ENCODE measurements at regions of chr7 and their contacts with region 1.

Region 1: GRCh38 chr7:152336754-152337368 is 98.9 kb downstream of the KMT2C start:
- DNase-seq: no peak
- H3K4me3 ChIP-seq: no peak overlapping the region
- CTCF ChIP-seq: peak; percentile 49

Region 2: GRCh38 chr7:152351168-152351567 is 14.3 kb after region 1 on chr7:
- CTCF ChIA-PET with region 1: interaction called, 13 read pairs
- POLR2A ChIA-PET with region 1: no interaction called
- DNase-seq: no peak
- H3K4me3 ChIP-seq: no peak overlapping the region
- CTCF ChIP-seq: no peak

Region 3: GRCh38 chr7:152707766-152708165 is 370.9 kb after region 1 on chr7:
- CTCF ChIA-PET with region 1: interaction called, 22 read pairs
- POLR2A ChIA-PET with region 1: no interaction called
- DNase-seq: no peak
- H3K4me3 ChIP-seq: no peak overlapping the region
- CTCF ChIP-seq: no peak

Measured in AG04449 (cell line).